CD4-positive, alpha-beta memory T cell (primary cell): ENCODE measurements at regions of chr2 and their contacts with region 1.

Region 1: DNA sequence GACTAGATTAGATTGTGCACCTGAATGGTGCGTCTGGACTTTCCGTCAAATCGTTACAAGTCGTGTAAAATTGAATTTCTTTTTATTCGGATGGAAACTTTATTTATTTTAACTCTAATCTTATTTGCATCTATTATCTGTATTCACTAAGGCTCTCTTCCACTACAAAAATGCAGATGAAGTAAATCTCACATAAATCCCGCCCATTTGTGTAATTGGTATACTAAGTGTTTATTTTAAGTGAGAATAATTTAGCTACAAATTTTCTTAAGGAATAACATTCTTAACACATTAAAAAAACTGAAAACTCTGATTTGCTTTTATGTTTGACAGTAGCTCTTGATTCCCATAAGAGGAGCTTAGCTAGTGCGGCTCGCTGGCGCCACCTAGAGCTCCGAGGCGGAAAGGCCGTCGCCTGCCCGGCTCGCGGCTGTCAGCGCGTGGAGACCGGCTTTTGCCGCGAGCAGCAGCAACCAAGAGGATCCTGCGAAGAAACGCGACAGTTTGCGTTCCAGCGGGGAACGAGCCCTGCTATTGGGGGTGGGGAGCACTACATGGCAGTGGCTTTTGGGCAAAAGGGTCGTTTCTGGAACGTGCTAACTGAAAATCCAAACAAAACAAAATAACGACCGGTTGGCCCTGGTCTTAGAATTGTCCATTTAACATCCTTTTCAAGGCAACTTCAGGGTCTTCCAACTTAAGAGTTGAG is 6.7 kb downstream of the SP9 start:
- DNase-seq: peak; percentile 83 to 89 (median 86)
- H3K4me3 ChIP-seq: peak overlapping the region in 1 of 2 donors; percentile 18
- H3K4me3 Mint-ChIP-seq: peak overlapping the region; percentile 13 to 95 (median 79)
- H3K27ac ChIP-seq: no peak overlapping the region
- H3K27ac Mint-ChIP-seq: peak overlapping the region in 6 of 7 donors; percentile 65 to 97 (median 88)
- H3K4me1 ChIP-seq: peaks cover 56% of the 10 kb centered on the region
- H3K4me1 Mint-ChIP-seq: peaks cover 18 to 48% (median 32%) of the 10 kb centered on the region in 4 donors
- H3K27me3 ChIP-seq: peaks cover 70% of the 10 kb centered on the region
- H3K27me3 Mint-ChIP-seq: peaks cover 47 to 51% of the 10 kb centered on the region in 2 donors

Region 2: GRCh38 chr2:173210270-173211196 is 1130.9 kb before region 1 on chr2:
- CTCF ChIA-PET with region 1: interaction called, 6 read pairs
- POLR2A ChIA-PET with region 1: no interaction called
- intact Hi-C with region 1: loop called (anchors 10 kb)
- DNase-seq: peak; percentile 34 to 50 (median 47)
- H3K4me3 ChIP-seq: no peak overlapping the region
- H3K4me3 Mint-ChIP-seq: no peak overlapping the region
- H3K27ac ChIP-seq: no peak overlapping the region
- H3K27ac Mint-ChIP-seq: peak overlapping the region in 1 of 7 donors; percentile 28
- H3K4me1 ChIP-seq: no peaks in the 10 kb centered on the region
- H3K4me1 Mint-ChIP-seq: peaks cover 0 to 2% (median 0%) of the 10 kb centered on the region in 4 donors
- H3K27me3 ChIP-seq: no peaks in the 10 kb centered on the region
- H3K27me3 Mint-ChIP-seq: peaks cover 3 to 4% of the 10 kb centered on the region in 2 donors

Region 3: GRCh38 chr2:173571021-173571882 is 770.2 kb before region 1 on chr2:
- CTCF ChIA-PET with region 1: no interaction called
- POLR2A ChIA-PET with region 1: no interaction called
- intact Hi-C with region 1: loop called (anchors 5 kb)
- DNase-seq: no peak
- H3K4me3 ChIP-seq: no peak overlapping the region
- H3K4me3 Mint-ChIP-seq: peak overlapping the region in 1 of 8 donors; percentile 29
- H3K27ac ChIP-seq: no peak overlapping the region
- H3K27ac Mint-ChIP-seq: peak overlapping the region in 1 of 7 donors; percentile 1
- H3K4me1 ChIP-seq: no peaks in the 10 kb centered on the region
- H3K4me1 Mint-ChIP-seq: peaks cover 0 to 9% (median 4%) of the 10 kb centered on the region in 4 donors
- H3K27me3 ChIP-seq: no peaks in the 10 kb centered on the region
- H3K27me3 Mint-ChIP-seq: peaks cover 2 to 12% of the 10 kb centered on the region in 2 donors

Region 4: DNA sequence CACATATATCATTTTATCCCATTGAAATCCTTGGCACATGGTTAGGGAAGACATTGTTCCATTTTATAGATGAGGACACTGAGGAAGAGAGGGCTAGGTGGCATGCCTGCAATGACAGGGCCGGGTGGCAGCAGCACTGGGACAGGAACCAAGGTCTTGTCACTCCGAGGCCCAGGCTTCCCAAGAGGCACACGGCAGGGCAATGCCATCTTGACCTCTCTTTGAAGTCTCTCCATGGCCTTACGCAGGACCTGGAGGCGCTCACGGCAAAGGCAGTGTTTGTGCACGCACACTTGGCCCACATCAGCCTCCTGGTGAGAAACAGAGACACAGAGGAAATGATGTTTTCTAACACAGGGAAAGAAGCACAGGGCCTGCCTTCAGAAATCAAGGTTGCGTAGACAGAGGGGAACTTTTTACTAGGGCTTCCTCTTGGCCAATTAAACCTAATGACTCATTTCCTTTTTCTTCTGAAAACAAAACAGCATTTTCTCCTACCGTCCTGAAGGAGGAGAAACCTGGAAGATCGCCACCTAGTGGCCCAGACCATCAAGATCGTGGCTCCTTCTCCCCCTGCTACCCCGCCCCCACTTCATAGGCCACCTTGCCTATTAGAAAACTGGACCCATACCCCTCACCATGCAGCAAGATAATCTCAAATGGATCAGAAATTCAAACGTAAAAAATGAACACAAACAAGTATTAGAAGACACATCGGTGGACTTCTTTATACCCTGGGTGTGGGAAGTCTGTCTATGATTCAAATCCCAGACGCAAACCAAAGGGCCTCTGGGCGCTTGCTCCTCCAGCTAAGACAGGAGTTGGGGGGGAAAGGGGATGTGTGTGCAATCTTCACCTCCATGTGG is 301.7 kb before region 1 on chr2:
- CTCF ChIA-PET with region 1: interaction called, 8 read pairs
- POLR2A ChIA-PET with region 1: no interaction called
- intact Hi-C with region 1: loop called (anchors 1 kb)
- DNase-seq: peak; percentile 76 to 86 (median 78)
- H3K4me3 ChIP-seq: peak overlapping the region in 1 of 2 donors; percentile 45
- H3K4me3 Mint-ChIP-seq: peak overlapping the region; percentile 12 to 79 (median 53)
- H3K27ac ChIP-seq: peak overlapping the region; percentile 73
- H3K27ac Mint-ChIP-seq: peak overlapping the region; percentile 73 to 94 (median 89)
- H3K4me1 ChIP-seq: peaks cover 10% of the 10 kb centered on the region
- H3K4me1 Mint-ChIP-seq: peaks cover 8 to 10% (median 8%) of the 10 kb centered on the region in 4 donors
- H3K27me3 ChIP-seq: no peaks in the 10 kb centered on the region
- H3K27me3 Mint-ChIP-seq: peaks cover 1 to 3% of the 10 kb centered on the region in 2 donors

Region 5: DNA sequence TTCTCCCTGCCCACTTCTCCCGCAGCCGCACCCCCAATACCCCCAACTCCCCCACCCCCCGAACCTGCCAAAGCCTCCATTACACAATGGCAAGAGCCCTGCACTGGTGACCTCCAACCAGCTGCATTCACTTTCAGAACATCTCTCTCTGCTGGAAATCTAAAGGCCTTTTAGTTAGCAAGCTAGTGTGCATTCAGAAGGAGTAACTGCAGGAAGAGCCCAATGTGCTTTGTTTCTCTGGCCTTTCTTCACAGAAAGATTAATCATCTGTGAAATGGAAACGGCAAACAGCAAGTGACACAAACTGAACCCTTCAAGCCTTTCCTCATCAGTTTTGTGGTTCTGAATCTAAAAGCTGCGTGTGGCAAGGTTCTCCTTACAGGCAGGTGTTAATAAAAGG is 217.3 kb before region 1 on chr2:
- CTCF ChIA-PET with region 1: no interaction called
- POLR2A ChIA-PET with region 1: no interaction called
- intact Hi-C with region 1: no loop called
- DNase-seq: no peak
- H3K4me3 ChIP-seq: no peak overlapping the region
- H3K4me3 Mint-ChIP-seq: no peak overlapping the region
- H3K27ac ChIP-seq: no peak overlapping the region
- H3K27ac Mint-ChIP-seq: no peak overlapping the region
- H3K4me1 ChIP-seq: no peaks in the 10 kb centered on the region
- H3K4me1 Mint-ChIP-seq: no peaks in the 10 kb centered on the region
- H3K27me3 ChIP-seq: no peaks in the 10 kb centered on the region
- H3K27me3 Mint-ChIP-seq: no peaks in the 10 kb centered on the region

Region 6: GRCh38 chr2:174326161-174327020 is 15.0 kb before region 1 on chr2:
- CTCF ChIA-PET with region 1: interaction called, 35 read pairs
- POLR2A ChIA-PET with region 1: interaction called, 22 read pairs
- intact Hi-C with region 1: loop called (anchors 1 kb)
- DNase-seq: peak in 1 of 5 donors; percentile 24
- H3K4me3 ChIP-seq: peak overlapping the region; percentile 26 to 52
- H3K4me3 Mint-ChIP-seq: peak overlapping the region; percentile 70 to 87 (median 76)
- H3K27ac ChIP-seq: no peak overlapping the region
- H3K27ac Mint-ChIP-seq: peak overlapping the region in 2 of 7 donors; percentile 68 to 74
- H3K4me1 ChIP-seq: peaks cover 27% of the 10 kb centered on the region
- H3K4me1 Mint-ChIP-seq: peaks cover 16 to 43% (median 25%) of the 10 kb centered on the region in 4 donors
- H3K27me3 ChIP-seq: peaks cover 57% of the 10 kb centered on the region
- H3K27me3 Mint-ChIP-seq: peaks cover 61 to 75% of the 10 kb centered on the region in 2 donors